AG04450 (cell line): ENCODE measurements at regions of chr5 and their contacts with region 1.

Region 1: GRCh38 chr5:120655828-120656435 is 191.8 kb downstream of the PRR16 start:
- DNase-seq: no peak
- H3K4me3 ChIP-seq: no peak overlapping the region
- H3K27ac ChIP-seq: no peak overlapping the region
- H3K27me3 ChIP-seq: no peaks in the 10 kb centered on the region
- CTCF ChIP-seq: peak; percentile 60

Region 2: GRCh38 chr5:120345947-120346346 is 310.0 kb before region 1 on chr5:
- CTCF ChIA-PET with region 1: no interaction called
- POLR2A ChIA-PET with region 1: no interaction called
- DNase-seq: no peak
- H3K4me3 ChIP-seq: no peak overlapping the region
- H3K27ac ChIP-seq: no peak overlapping the region
- H3K27me3 ChIP-seq: no peaks in the 10 kb centered on the region
- CTCF ChIP-seq: no peak

Region 3: DNA sequence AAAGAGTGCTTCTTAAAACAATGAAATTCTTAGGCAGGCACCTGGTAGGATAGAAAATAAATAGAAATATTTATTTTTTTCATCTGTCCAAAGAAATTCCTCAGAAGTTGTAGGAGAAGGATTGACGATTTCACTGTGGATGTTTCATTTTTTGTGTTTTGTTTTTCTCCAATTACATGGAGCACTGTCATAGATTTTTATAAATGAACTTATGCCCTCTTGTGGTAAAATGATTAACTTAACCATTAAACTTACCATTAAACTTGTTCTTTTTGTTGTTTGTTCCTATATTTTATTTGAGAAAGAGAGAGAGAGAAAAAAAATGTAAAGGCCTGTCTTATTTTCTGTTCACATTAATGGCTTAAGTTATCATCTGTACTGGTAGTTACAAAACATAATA is 147.3 kb after region 1 on chr5:
- CTCF ChIA-PET with region 1: interaction called, 17 read pairs
- POLR2A ChIA-PET with region 1: no interaction called
- DNase-seq: no peak
- H3K4me3 ChIP-seq: no peak overlapping the region
- H3K27ac ChIP-seq: no peak overlapping the region
- H3K27me3 ChIP-seq: no peaks in the 10 kb centered on the region
- CTCF ChIP-seq: peak; percentile 22; the same call in 1 of the 2 replicates

Region 4: DNA sequence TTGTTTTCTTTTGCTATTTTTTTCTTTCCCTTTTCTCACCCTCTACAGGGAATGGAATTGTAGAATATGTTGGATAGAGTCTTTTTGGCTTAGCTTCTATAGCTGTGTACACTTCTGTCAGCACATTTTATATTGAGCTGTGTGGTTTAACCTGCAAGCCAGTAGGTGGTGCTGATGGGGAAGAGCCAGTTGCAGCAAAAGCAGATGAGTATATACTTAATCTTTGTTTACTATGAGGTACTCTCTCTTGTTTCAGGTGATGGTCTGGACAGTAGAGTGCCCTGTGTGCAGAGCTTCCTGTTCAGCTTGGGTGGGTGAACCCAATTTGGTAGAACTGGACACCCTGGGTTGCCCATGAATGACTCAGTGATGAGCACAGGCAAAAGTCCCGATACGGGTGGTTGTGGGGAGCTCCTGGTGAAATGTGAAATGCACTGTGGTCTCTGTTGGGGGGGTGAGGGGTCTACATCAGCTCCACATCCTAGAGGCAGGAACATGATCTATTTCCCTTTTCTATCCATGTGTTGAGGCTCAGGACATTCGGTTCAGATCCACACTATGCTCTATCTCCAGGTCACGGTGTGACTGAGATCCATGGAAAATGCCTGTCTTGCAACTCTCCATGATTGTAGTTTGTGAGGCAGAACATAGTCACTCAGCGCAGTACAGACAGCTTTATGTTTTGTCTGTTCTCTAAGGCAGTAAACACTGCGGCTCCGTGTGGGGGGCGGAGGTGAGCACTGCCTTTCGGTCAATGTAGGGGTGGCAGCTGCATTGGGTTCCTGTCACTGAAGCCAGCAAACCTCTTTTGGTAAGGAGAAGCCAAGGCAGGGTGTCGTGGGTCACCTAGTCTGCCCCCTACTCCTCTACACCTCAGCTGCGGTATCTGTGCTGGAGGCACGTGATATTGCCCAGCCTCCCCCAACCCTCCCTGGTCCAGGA is 161.4 kb after region 1 on chr5:
- CTCF ChIA-PET with region 1: no interaction called
- POLR2A ChIA-PET with region 1: no interaction called
- DNase-seq: no peak
- H3K4me3 ChIP-seq: no peak overlapping the region
- H3K27ac ChIP-seq: no peak overlapping the region
- H3K27me3 ChIP-seq: no peaks in the 10 kb centered on the region
- CTCF ChIP-seq: peak; percentile 55